ENCODE measurements at regions of chrX and their contacts with region 1.

Region 1: GRCh38 chrX:74015379-74016019 is 288.5 kb upstream of the ZCCHC13 start:
- DNase-seq: peak; percentile 85
- H3K4me3 Mint-ChIP-seq: no peak overlapping the region
- H3K27ac Mint-ChIP-seq: no peak overlapping the region
- H3K4me1 Mint-ChIP-seq: no peaks in the 10 kb centered on the region
- H3K27me3 Mint-ChIP-seq: no peaks in the 10 kb centered on the region

Region 2: GRCh38 chrX:73855546-73855945 is 160.0 kb before region 1 on chrX:
- intact Hi-C with region 1: loop called (anchors 1 kb)
- DNase-seq: peak; percentile 86
- H3K4me3 Mint-ChIP-seq: no peak overlapping the region
- H3K27ac Mint-ChIP-seq: no peak overlapping the region
- H3K4me1 Mint-ChIP-seq: no peaks in the 10 kb centered on the region
- H3K27me3 Mint-ChIP-seq: no peaks in the 10 kb centered on the region

Region 3: GRCh38 chrX:73877687-73878086 is 137.8 kb before region 1 on chrX:
- intact Hi-C with region 1: no loop called
- DNase-seq: no peak
- H3K4me3 Mint-ChIP-seq: no peak overlapping the region
- H3K27ac Mint-ChIP-seq: no peak overlapping the region
- H3K4me1 Mint-ChIP-seq: no peaks in the 10 kb centered on the region
- H3K27me3 Mint-ChIP-seq: no peaks in the 10 kb centered on the region

Region 4: DNA sequence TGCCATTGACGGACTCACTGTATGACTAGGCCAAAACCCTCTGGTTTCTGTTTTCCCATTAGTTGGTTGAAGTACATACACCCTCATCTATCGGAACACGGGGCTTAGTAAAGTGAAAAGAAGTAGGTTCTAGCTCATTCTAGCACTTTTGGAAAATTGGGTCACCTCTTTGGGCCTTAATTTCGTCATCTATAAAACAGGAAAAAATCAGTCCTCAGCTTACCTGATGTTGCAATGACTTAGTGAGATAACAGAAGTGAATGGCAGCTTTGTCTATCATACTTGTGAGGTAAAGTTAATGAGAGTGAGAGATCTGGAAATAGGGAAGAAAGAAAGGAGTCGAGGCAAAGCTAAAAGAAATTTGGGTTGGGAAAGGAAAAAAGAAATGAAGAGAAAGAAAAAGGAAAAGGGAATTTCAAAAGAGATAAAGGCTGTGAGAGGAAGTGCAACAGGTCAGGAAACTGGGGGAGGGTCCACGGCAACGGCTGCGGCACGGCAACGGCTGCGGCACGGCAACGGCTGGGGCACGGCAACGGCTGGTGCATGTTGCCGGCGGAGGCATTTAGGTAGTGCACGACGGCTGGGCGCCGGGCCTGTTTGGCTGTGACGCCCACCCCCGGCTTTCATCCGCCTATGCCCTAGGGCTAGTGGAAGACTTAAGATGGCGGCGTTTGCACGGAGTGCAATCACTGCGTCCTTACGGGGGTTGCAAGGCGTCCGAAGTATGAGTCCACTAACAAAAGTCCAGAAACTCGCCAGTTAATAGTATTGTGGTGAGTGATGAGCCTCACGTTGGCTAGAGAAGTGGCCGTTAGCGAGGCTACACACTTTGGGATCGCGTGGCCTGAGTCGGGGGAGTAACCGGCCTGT is 71.6 kb before region 1 on chrX:
- intact Hi-C with region 1: loop called (anchors 10 kb)
- DNase-seq: peak; percentile 95
- H3K4me3 Mint-ChIP-seq: peak overlapping the region; percentile 86
- H3K27ac Mint-ChIP-seq: peak overlapping the region; percentile 90
- H3K4me1 Mint-ChIP-seq: peaks cover 18% of the 10 kb centered on the region
- H3K27me3 Mint-ChIP-seq: no peaks in the 10 kb centered on the region

Region 5: DNA sequence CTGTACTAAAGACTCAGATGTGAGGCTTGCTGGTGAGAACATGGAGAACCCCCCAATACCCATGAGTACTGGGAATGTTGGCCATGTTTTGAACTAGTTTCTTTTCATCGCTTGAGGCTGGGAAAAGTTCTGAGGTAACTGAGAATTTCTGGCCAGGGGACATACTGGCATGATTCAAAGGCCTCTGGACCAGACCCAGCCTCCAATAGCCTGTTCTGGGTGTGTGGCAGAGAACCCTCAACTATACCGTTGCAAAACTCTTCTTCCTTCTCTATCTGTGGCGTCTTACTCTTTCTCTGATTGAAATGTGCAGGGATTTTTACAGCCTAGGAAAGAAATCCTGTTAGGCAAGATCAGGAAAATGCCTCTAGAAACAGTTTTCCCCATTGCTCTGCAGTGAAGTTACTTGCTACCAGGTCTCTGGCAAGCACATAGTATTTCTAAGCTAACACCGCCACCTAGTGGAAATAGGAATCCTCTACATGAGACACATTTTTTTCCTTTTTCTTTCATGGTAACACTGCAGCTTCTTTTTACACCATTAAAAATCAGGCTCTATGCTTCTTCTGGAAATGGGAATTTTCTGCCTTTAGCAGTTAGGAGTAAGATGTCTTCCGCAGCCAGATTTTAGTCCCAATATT is 117.8 kb after region 1 on chrX:
- intact Hi-C with region 1: loop called (anchors 10 kb)
- DNase-seq: peak; percentile 73
- H3K4me3 Mint-ChIP-seq: no peak overlapping the region
- H3K27ac Mint-ChIP-seq: no peak overlapping the region
- H3K4me1 Mint-ChIP-seq: no peaks in the 10 kb centered on the region
- H3K27me3 Mint-ChIP-seq: no peaks in the 10 kb centered on the region

Region 6: DNA sequence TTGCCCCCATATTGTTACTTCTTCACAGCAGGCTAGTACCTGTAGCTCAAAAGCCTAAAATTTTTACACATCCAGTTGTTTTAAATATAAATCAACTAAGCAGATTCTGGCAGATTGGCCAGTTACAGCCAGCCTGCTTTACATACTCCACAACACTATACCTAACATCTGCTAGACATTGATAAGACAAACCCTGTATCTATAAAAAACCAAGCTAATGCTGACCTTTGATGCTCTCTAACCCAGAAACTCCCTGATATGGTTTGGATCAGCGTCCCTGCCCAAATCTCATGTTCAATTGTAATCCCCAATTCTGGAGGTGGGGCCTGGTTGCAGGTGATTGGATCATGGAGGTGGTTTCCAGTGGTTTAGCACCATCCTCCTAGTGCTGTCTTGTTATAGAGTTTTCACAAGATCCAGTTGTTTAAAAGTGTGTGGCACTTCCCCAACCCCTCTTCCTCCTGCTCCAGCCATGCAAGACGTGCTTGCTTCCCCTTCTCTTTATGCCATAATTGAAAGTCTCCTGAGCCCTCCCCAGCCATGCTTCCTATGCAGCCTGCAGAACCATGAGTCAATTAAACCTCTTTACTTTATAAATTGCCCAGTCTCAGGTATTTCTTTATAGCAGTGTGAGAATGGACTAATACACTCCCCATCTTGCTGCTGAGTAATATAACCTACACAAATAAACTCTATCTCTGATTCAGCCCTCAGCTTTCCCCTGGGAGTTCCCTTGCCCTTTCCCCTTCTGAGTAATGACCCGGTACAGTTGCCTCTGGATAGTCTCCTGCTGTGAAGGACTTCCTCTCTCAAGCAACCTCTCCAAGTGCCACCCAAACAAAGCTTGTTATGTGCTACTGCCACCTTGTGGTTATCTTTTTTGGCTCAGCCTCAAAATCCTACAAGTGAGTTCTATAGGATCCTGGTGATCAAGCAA is 328.1 kb after region 1 on chrX:
- intact Hi-C with region 1: loop called (anchors 5 kb)
- DNase-seq: peak; percentile 83
- H3K4me3 Mint-ChIP-seq: no peak overlapping the region
- H3K27ac Mint-ChIP-seq: no peak overlapping the region
- H3K4me1 Mint-ChIP-seq: peaks cover 6% of the 10 kb centered on the region
- H3K27me3 Mint-ChIP-seq: peaks cover 5% of the 10 kb centered on the region